Naive thymus-derived CD8-positive, alpha-beta T cell (primary cell): ENCODE measurements at regions of chr12 and their contacts with region 1.

Region 1: GRCh38 chr12:92145731-92146496 is at the start of gene BTG1:
- DNase-seq: peak; percentile 87 to 100 (median 100)
- ATAC-seq: peak; percentile 68 to 72
- H3K4me3 Mint-ChIP-seq: peak within 1 kb of the TSS; percentile 89 to 100 (median 100)
- H3K27ac Mint-ChIP-seq: peak within 1 kb of the TSS; percentile 91 to 100 (median 99)
- H3K4me1 Mint-ChIP-seq: peaks cover 20 to 38% (median 30%) of the 10 kb centered on the region in 4 donors
- H3K27me3 Mint-ChIP-seq: peaks cover 0 to 4% (median 0%) of the 10 kb centered on the region in 5 donors
- polyA plus RNA-seq, gene BTG1: 705 to 889 (median 719) TPM

Region 2: DNA sequence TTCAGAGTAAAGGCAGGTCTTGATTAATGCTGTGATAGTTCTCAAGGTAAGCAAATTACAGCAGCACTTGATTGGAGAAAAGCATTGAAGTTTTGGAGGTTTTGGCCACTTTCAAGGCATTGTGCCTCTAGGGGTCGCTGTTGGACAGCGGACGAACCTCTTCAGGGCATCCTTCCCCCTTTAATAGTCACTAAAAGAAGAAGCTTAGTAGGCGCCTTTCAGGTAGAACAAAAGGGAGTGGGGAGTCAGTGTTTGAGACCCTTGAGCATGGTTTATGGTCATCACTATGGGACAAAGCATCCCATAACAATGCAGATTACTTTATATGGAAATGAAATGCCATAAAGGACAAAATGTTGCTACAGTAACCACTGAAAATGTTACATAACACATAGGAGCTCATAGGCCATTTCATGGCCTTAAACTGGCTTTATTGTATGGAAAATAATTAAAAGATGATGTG is 763.8 kb before region 1 on chr12:
- POLR2A ChIA-PET with region 1: interaction called, 25 read pairs
- DNase-seq: peak; percentile 70 to 92 (median 84)
- ATAC-seq: peak; percentile 91 to 92
- H3K4me3 Mint-ChIP-seq: peak overlapping the region; percentile 70 to 89 (median 86)
- H3K27ac Mint-ChIP-seq: peak overlapping the region; percentile 3 to 92 (median 76)
- H3K4me1 Mint-ChIP-seq: peaks cover 4 to 10% (median 8%) of the 10 kb centered on the region in 4 donors
- H3K27me3 Mint-ChIP-seq: peaks cover 2 to 11% (median 3%) of the 10 kb centered on the region in 5 donors

Region 3: GRCh38 chr12:91985002-91985787 is 160.7 kb before region 1 on chr12:
- POLR2A ChIA-PET with region 1: interaction called, 81 read pairs
- DNase-seq: peak in 2 of 10 donors; percentile 25 to 39
- ATAC-seq: peak; percentile 72 to 77
- H3K4me3 Mint-ChIP-seq: peak overlapping the region in 8 of 10 donors; percentile 23 to 67 (median 36)
- H3K27ac Mint-ChIP-seq: peak overlapping the region in 9 of 10 donors; percentile 13 to 86 (median 61)
- H3K4me1 Mint-ChIP-seq: peaks cover 25 to 69% (median 67%) of the 10 kb centered on the region in 4 donors
- H3K27me3 Mint-ChIP-seq: no peaks in the 10 kb centered on the region

Region 4: DNA sequence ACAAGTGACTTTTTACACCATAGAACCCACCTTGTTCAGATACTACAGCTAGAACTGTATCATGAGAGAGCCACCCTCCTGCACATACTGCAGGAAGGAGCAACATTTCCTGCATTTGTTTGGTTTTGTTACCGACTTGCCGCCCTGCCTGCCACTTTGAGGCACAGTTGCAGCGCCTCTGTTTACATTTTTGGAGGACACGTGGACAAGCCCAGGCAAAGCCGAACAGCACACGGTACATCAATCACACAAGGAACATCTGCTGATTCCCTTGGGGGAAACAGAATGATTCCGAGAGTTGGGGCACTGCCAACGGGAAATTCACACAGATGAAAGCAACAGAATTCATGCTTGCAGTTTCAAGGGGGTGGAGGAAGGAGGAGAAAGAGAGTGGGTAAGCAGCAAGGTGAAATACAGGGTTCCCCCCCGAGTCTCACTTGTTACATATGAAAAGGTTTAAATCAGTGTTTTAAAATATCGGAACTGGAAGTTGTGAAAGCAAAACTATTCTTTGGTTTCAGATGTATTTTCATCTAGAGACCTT is 111.0 kb before region 1 on chr12:
- POLR2A ChIA-PET with region 1: interaction called, 283 read pairs
- DNase-seq: peak; percentile 32 to 77 (median 68)
- ATAC-seq: peak; percentile 51 to 52
- H3K4me3 Mint-ChIP-seq: peak overlapping the region; percentile 83 to 96 (median 92)
- H3K27ac Mint-ChIP-seq: peak overlapping the region; percentile 91 to 100 (median 99)
- H3K4me1 Mint-ChIP-seq: peaks cover 36 to 96% (median 92%) of the 10 kb centered on the region in 4 donors
- H3K27me3 Mint-ChIP-seq: no peaks in the 10 kb centered on the region

Region 5: GRCh38 chr12:92158796-92159439 is 13.0 kb after region 1 on chr12:
- POLR2A ChIA-PET with region 1: interaction called, 114 read pairs
- DNase-seq: peak in 3 of 10 donors; percentile 23 to 47 (median 44)
- ATAC-seq: peak; percentile 76 to 82
- H3K4me3 Mint-ChIP-seq: peak overlapping the region; percentile 57 to 87 (median 76)
- H3K27ac Mint-ChIP-seq: peak overlapping the region; percentile 74 to 99 (median 94)
- H3K4me1 Mint-ChIP-seq: peaks cover 27 to 93% (median 71%) of the 10 kb centered on the region in 4 donors
- H3K27me3 Mint-ChIP-seq: no peaks in the 10 kb centered on the region

Region 6: DNA sequence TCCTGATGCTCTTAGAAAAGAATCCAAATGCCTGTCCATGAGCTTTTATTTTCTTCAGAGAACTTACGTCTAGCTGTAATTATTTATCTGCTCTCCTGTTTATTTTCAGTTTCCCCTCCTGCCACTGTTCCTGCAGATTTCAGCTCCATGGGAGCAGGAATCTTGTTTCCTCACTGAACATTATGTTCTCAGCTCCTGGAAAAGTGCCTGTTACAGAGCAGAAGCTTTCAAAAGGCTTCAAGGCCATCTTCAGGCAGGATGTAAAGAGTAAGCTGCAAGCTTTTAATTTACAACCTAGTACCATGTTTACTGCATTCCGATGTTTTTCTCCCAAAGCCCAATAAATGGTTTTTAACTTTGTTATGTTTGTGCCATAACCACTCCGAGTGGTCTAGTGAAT is 98.1 kb after region 1 on chr12:
- POLR2A ChIA-PET with region 1: interaction called, 21 read pairs
- DNase-seq: no peak
- ATAC-seq: no peak
- H3K4me3 Mint-ChIP-seq: peak overlapping the region in 3 of 10 donors; percentile 27 to 55 (median 33)
- H3K27ac Mint-ChIP-seq: peak overlapping the region in 8 of 10 donors; percentile 0 to 80 (median 42)
- H3K4me1 Mint-ChIP-seq: peaks cover 15 to 23% (median 17%) of the 10 kb centered on the region in 4 donors
- H3K27me3 Mint-ChIP-seq: no peaks in the 10 kb centered on the region

Region 7: GRCh38 chr12:92408072-92408900 is 262.4 kb after region 1 on chr12:
- POLR2A ChIA-PET with region 1: interaction called, 272 read pairs
- DNase-seq: peak in 4 of 10 donors; percentile 18 to 40 (median 32)
- ATAC-seq: no peak
- H3K4me3 Mint-ChIP-seq: peak overlapping the region in 5 of 10 donors; percentile 8 to 57 (median 28)
- H3K27ac Mint-ChIP-seq: peak overlapping the region; percentile 16 to 88 (median 68)
- H3K4me1 Mint-ChIP-seq: peaks cover 20 to 70% (median 64%) of the 10 kb centered on the region in 4 donors
- H3K27me3 Mint-ChIP-seq: no peaks in the 10 kb centered on the region